ENCODE measurements at regions of chr19 and their contacts with region 1.

Region 1: DNA sequence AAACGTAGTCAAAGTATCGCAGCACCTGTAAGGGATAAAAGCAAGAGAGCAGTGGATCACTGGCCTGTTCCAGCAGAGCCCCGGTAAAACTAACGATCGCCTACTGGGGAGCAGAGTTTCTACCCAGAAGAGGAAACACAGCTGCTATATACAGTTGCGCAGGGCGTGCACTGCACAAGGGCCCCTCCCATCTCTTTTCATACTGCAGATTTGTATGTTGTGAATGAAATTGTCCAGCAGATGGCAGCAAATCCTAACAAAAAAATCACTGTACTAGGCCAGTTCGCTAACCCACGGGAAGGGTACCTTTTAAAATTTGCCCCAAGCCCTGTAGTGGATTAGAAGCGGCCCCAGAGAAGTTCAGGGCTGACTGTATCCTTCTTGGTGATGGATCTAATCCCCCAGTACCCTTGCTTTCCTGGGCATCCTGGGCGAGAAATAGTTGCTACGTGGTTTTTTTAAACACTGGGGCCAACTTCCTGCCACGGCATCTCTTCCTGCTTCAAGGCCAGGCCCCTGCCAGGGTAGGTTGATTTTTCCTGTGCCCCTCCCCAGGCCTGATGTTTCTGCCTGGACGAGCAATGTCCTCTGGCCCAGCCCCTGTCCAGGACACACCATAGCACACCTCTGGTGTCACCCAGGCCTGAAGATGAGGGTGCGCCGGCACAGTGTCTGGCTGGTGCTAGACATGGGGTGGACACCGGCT is 127.0 kb downstream of the IER2 start:
- DNase-seq: peak; percentile 69
- H3K4me3 Mint-ChIP-seq: peak overlapping the region; percentile 41
- H3K27ac Mint-ChIP-seq: peak overlapping the region; percentile 73
- H3K4me1 Mint-ChIP-seq: peaks cover 25% of the 10 kb centered on the region
- H3K27me3 Mint-ChIP-seq: no peaks in the 10 kb centered on the region

Region 2: GRCh38 chr19:13181747-13182388 is 95.4 kb before region 1 on chr19:
- CTCF ChIA-PET with region 1: no interaction called
- POLR2A ChIA-PET with region 1: no interaction called
- intact Hi-C with region 1: no loop called
- DNase-seq: peak; percentile 61
- H3K4me3 Mint-ChIP-seq: peak overlapping the region; percentile 8
- H3K27ac Mint-ChIP-seq: peak overlapping the region; percentile 60
- H3K4me1 Mint-ChIP-seq: peaks cover 25% of the 10 kb centered on the region
- H3K27me3 Mint-ChIP-seq: no peaks in the 10 kb centered on the region

Region 3: GRCh38 chr19:13334801-13335481 is 57.7 kb after region 1 on chr19:
- CTCF ChIA-PET with region 1: interaction called, 5 read pairs
- POLR2A ChIA-PET with region 1: no interaction called
- intact Hi-C with region 1: loop called (anchors 2 kb)
- DNase-seq: no peak
- H3K4me3 Mint-ChIP-seq: no peak overlapping the region
- H3K27ac Mint-ChIP-seq: no peak overlapping the region
- H3K4me1 Mint-ChIP-seq: no peaks in the 10 kb centered on the region
- H3K27me3 Mint-ChIP-seq: peaks cover 22% of the 10 kb centered on the region

Region 4: DNA sequence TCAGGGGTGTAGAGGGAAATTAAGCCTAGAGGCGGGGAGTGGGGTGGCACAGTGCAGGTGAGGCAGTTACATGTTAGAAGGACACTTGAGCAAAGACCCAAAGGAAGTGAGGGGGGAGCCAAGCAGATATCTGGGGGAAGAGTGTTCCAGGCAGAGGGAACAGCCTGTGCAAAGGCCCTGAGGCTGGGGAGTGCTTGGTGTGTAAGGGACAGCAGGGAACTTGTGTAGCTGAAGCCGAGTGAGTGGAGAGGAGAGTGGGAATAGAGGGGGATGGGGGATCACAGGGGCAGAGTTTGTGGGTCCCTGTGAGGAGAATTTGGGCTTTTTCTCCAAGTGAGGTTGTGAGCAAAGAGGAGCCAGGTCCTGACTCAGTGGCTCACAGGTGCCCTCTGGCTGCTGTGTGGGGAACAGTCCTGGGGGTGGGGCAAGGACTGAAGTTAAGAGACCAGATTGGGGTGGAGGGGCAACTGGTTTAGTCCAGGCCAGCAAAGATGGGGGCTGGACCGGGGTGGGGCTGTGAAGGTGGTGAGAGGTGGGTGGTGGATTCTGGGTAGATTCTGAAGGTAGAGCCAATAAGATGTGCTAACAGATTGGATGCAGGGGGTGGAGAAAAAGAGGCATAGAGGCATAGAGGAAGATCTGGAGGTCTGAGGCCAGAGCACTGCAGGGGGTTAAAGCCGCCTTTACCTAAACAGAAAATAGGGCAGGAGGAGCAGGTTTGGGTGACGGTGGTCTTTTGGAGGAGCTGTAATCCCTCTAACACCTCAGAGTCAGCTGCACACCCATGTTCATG is 153.7 kb after region 1 on chr19:
- CTCF ChIA-PET with region 1: interaction called, 9 read pairs
- POLR2A ChIA-PET with region 1: no interaction called
- intact Hi-C with region 1: loop called (anchors 1 kb)
- DNase-seq: peak; percentile 71
- H3K4me3 Mint-ChIP-seq: no peak overlapping the region
- H3K27ac Mint-ChIP-seq: no peak overlapping the region
- H3K4me1 Mint-ChIP-seq: no peaks in the 10 kb centered on the region
- H3K27me3 Mint-ChIP-seq: peaks cover 15% of the 10 kb centered on the region

Region 5: GRCh38 chr19:13574933-13575332 is 297.7 kb after region 1 on chr19:
- CTCF ChIA-PET with region 1: interaction called, 14 read pairs
- POLR2A ChIA-PET with region 1: interaction called, 3 read pairs
- intact Hi-C with region 1: no loop called
- DNase-seq: no peak
- H3K4me3 Mint-ChIP-seq: no peak overlapping the region
- H3K27ac Mint-ChIP-seq: no peak overlapping the region
- H3K4me1 Mint-ChIP-seq: no peaks in the 10 kb centered on the region
- H3K27me3 Mint-ChIP-seq: peaks cover 14% of the 10 kb centered on the region

Region 6: GRCh38 chr19:13588957-13589833 is 311.9 kb after region 1 on chr19:
- CTCF ChIA-PET with region 1: interaction called, 48 read pairs
- POLR2A ChIA-PET with region 1: no interaction called
- intact Hi-C with region 1: loop called (anchors 1 kb)
- DNase-seq: peak; percentile 87
- H3K4me3 Mint-ChIP-seq: no peak overlapping the region
- H3K27ac Mint-ChIP-seq: no peak overlapping the region
- H3K4me1 Mint-ChIP-seq: no peaks in the 10 kb centered on the region
- H3K27me3 Mint-ChIP-seq: peaks cover 8% of the 10 kb centered on the region

Measured in activated CD4-positive, alpha-beta memory T cell treated with anti-CD3 and anti-CD28 coated beads for 36 hours (primary cell).